ENCODE measurements at regions of chr12 and their contacts with region 1.

Region 1: DNA sequence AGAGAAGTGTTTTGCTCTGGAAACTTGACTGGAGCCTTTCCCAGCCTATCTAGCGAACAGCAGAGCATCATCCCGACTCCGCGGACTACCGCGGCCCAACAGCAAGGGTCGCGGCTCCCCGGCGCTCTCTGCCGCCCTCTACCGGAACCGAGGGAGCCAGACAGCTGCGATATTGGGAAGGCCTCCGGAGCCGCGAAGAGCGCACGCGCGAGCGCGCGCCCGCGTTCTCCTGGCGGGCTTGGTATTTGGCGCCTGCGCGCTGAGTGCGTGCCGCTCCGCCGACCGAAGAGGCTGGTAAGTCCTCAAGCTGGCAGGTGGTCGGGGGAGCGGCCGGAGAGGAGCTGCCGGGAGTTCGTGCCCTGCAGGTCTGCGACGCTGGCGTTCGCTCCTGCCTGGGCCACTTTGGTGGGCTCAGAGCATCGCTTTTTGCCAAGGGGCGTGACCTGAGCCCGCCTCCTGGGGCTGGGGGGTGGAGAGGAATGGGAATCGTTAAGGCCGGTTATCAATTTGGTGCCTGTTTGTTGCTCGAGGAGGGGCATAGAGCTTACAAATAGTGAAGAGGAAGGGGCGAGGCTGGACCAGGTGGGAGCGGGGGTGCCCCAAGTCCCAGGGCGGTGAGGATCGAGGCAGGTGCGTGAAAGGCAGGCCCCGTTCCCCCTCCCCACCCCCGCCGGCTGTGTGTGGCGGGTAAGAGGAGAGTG is at the start of gene TMEM106C:
- DNase-seq: peak; percentile 100
- CTCF ChIP-seq: peak; percentile 98

Region 2: DNA sequence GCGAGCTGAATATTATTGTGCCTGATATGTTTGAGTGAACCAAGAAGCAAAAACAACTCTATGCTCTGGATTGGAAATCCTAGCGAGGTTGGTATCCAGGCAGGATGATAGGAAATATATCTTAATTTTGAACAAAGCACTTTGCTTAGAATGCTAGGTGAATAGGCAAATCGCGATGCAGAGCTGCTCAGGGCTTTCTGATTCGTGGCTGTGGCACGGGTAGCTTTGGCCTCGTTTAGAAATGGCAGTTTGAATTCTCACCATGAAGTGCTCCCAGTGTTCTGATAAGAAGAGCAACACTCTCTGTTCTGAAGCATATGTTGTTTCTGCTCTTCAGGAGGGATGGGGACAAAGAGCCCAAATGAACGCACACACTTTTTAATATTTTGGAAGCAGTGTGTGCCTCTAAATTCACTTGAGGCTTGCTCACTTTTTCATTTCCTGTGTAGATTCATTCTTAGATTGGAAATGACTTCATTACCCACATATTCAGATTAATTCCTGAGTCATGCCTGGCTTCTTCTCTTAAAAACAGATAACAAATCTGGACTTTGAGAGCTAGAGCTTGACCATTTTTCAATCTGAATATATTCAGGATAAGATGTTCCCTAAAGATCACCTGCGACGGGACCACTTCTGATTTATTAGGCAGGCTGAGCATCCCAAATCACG is 458.6 kb before region 1 on chr12:
- CTCF ChIA-PET with region 1: no interaction called
- POLR2A ChIA-PET with region 1: no interaction called
- DNase-seq: no peak
- CTCF ChIP-seq: no peak

Region 3: GRCh38 chr12:47896633-47897032 is 66.9 kb before region 1 on chr12:
- CTCF ChIA-PET with region 1: interaction called, 13 read pairs
- POLR2A ChIA-PET with region 1: no interaction called
- DNase-seq: no peak
- CTCF ChIP-seq: no peak

Region 4: DNA sequence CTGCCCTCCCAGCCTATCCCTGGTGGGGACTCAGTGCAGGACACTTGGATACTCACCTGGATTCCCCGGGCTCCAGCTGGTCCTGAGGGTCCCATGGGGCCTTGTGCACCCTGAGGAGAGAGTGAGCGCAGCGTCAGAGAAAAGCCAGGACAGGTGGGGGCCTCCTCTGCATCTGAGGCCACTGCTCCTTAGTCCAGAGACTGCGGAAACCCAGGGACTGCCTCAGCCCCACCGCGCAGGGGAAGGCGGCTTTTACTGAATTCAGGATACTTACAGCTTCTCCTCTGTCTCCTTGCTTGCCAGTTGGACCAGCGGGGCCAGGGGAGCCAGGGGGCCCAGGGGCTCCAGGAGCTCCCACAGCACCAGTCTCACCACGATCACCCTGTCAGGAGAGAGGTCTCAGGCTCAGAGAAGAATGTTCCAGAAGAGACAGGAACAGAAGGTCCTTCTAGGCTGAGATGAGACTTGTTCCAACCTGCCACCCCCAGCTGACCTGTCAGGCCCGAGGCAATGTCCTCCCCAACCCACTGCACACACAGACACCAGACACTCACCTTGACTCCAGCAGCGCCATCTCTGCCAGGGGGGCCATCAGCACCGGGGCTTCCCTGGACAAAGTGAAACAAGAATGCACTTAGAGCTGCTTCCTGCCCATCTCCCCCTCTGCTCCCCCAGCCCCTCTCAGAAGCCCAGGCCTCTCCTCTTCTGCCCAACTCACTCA is 13.7 kb after region 1 on chr12:
- CTCF ChIA-PET with region 1: interaction called, 28 read pairs
- POLR2A ChIA-PET with region 1: no interaction called
- DNase-seq: no peak
- CTCF ChIP-seq: no peak

Region 5: GRCh38 chr12:48004053-48004941 is 40.8 kb after region 1 on chr12 and contains the start of gene COL2A1:
- CTCF ChIA-PET with region 1: no interaction called
- POLR2A ChIA-PET with region 1: no interaction called
- DNase-seq: no peak
- CTCF ChIP-seq: no peak

Region 6: DNA sequence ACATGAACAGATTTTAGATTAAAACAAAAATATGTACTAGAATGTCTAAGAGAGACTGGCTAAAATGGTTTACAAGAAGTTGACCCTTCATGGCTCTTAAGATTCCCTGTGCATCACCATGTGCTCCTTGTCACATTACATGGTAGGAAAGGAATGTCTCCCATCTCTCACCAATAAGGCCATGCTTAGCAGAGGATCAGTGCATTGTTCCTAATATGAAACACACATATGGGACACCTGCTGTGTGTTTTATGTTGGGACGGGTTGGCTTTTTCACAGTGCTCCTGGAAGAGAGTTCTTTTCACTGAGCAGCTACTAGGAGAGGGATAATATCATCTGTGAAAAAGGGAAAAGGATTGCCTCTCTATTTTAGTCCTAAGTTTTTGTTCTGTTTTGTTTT is 165.3 kb after region 1 on chr12:
- CTCF ChIA-PET with region 1: no interaction called
- POLR2A ChIA-PET with region 1: no interaction called
- DNase-seq: no peak
- CTCF ChIP-seq: no peak

Measured in GM10248 (cell line).